Activated CD8-positive, alpha-beta memory T cell treated with anti-CD3 and anti-CD28 coated beads, Interleukin-2, amount 10 ng/mL, durations not matched to agents 7 days and 5 days (primary cell): ENCODE measurements at regions of chr9 and their contacts with region 1.

Region 1: GRCh38 chr9:97376902-97377301 is 35.0 kb upstream of the TDRD7 start:
- DNase-seq: no peak
- ATAC-seq: no peak
- H3K4me3 Mint-ChIP-seq: no peak overlapping the region
- H3K27ac Mint-ChIP-seq: no peak overlapping the region
- H3K4me1 Mint-ChIP-seq: peaks cover 3% of the 10 kb centered on the region
- H3K27me3 Mint-ChIP-seq: no peaks in the 10 kb centered on the region

Region 2: GRCh38 chr9:97386733-97387503 is 10.0 kb after region 1 on chr9:
- CTCF ChIA-PET with region 1: interaction called, 15 read pairs
- DNase-seq: peak; percentile 83
- ATAC-seq: peak; percentile 74
- H3K4me3 Mint-ChIP-seq: no peak overlapping the region
- H3K27ac Mint-ChIP-seq: no peak overlapping the region
- H3K4me1 Mint-ChIP-seq: peaks cover 34% of the 10 kb centered on the region
- H3K27me3 Mint-ChIP-seq: peaks cover 66% of the 10 kb centered on the region